ENCODE measurements at regions of chr2 and their contacts with region 1.

Region 1: GRCh38 chr2:178761759-178762371 is 45.4 kb downstream of the TTN start:
- DNase-seq: peak; percentile 55
- H3K4me3 ChIP-seq: no peak overlapping the region
- H3K27ac ChIP-seq: no peak overlapping the region
- H3K4me1 ChIP-seq: no peaks in the 10 kb centered on the region
- H3K27me3 ChIP-seq: peaks cover 4 to 5% of the 10 kb centered on the region in 2 experiments
- CTCF ChIP-seq: peak; percentile 51 to 56
- POLR2A ChIP-seq: no peak

Region 2: DNA sequence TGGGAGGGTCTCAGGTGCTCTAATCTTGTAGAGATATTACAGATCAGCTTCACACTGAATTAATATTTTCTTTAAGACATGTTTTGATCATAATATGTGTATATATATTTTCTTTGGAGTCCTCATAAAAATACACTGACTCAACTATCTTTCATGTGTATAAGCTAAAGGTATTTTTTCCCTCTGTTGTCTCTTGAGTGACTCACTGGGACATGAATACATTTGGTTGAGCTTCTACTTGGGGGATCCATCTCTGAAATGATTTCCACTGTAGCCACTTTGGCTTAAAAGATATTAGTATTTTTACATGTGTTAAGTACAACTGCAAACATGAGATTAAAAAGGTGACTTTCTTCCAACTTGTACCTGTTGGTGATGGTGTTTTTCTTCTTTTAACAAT is 95.4 kb before region 1 on chr2:
- CTCF ChIA-PET with region 1: no interaction called
- POLR2A ChIA-PET with region 1: no interaction called
- dilution Hi-C with region 1: no loop called
- intact Hi-C with region 1: no loop called
- DNase-seq: no peak
- H3K4me3 ChIP-seq: no peak overlapping the region
- H3K27ac ChIP-seq: no peak overlapping the region
- H3K4me1 ChIP-seq: no peaks in the 10 kb centered on the region
- H3K27me3 ChIP-seq: no peaks in the 10 kb centered on the region
- CTCF ChIP-seq: no peak
- POLR2A ChIP-seq: no peak

Region 3: DNA sequence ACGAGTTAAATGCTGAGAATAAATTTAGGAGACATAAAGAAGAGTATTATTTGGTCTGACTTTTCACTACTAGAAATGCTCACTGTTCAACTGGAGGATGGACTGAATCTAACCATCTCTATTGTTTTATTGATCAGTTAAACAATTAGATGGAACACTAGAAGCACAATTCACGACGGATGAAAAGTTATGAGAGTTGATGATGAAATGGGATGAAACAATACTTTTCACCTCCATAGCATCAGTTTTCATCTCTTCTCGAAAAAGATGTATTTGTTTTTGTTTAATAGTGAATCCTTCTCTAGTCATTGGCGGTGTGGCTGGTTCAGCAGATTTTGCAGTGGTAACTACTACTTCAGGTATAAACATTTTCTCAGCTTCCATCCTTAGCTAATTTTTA is 26.1 kb after region 1 on chr2:
- CTCF ChIA-PET with region 1: interaction called, 5 read pairs
- POLR2A ChIA-PET with region 1: no interaction called
- dilution Hi-C with region 1: no loop called
- intact Hi-C with region 1: loop called (anchors 1 kb)
- DNase-seq: no peak
- H3K4me3 ChIP-seq: no peak overlapping the region
- H3K27ac ChIP-seq: no peak overlapping the region
- H3K4me1 ChIP-seq: no peaks in the 10 kb centered on the region
- H3K27me3 ChIP-seq: peaks cover 0 to 4% of the 10 kb centered on the region in 2 experiments
- CTCF ChIP-seq: no peak
- POLR2A ChIP-seq: no peak

Region 4: GRCh38 chr2:178830451-178830850 is 68.6 kb after region 1 on chr2:
- CTCF ChIA-PET with region 1: no interaction called
- POLR2A ChIA-PET with region 1: no interaction called
- dilution Hi-C with region 1: no loop called
- intact Hi-C with region 1: no loop called
- DNase-seq: peak; percentile 42
- H3K4me3 ChIP-seq: peak overlapping the region in 1 of 3 experiments; percentile 37
- H3K27ac ChIP-seq: peak overlapping the region; percentile 71
- H3K4me1 ChIP-seq: peaks cover 46% of the 10 kb centered on the region
- H3K27me3 ChIP-seq: no peaks in the 10 kb centered on the region
- CTCF ChIP-seq: no peak
- POLR2A ChIP-seq: no peak

Region 5: DNA sequence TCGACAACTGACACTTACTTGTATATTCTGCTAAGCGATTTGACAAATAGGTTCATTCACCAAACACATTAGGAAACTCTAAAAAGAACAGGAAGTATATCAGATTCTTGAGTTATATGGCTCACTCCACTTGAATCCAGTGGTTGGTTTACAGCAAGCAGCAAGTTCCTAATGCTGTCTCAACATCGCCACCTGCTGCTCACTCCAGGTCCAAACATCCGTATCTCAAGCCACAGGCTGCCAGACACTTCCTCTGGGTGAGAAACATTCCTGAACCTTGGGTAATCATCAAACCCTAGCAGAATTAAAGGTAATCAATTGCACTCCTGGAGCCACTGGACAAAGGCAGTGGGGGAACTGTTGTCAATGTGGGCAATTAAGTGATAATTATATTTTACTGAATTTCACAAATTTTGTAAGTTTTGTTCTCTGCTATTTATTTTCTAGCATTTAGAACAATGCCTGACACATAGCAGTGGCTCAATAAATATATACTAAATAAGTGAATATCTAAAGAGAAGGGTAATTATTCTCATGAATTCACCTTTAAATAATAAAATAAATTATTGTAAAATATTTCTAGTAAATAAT is 152.5 kb after region 1 on chr2:
- CTCF ChIA-PET with region 1: interaction called, 25 read pairs
- POLR2A ChIA-PET with region 1: no interaction called
- dilution Hi-C with region 1: no loop called
- intact Hi-C with region 1: loop called (anchors 1 kb)
- DNase-seq: peak; percentile 88
- H3K4me3 ChIP-seq: no peak overlapping the region
- H3K27ac ChIP-seq: no peak overlapping the region
- H3K4me1 ChIP-seq: peaks cover 2% of the 10 kb centered on the region
- H3K27me3 ChIP-seq: peaks cover 0 to 10% of the 10 kb centered on the region in 2 experiments
- CTCF ChIP-seq: peak; percentile 79 to 88
- POLR2A ChIP-seq: no peak

Region 6: GRCh38 chr2:179020156-179020750 is 258.4 kb after region 1 on chr2:
- CTCF ChIA-PET with region 1: interaction called, 11 read pairs
- POLR2A ChIA-PET with region 1: no interaction called
- dilution Hi-C with region 1: no loop called
- intact Hi-C with region 1: loop called (anchors 10 kb)
- DNase-seq: peak; percentile 28
- H3K4me3 ChIP-seq: no peak overlapping the region
- H3K27ac ChIP-seq: no peak overlapping the region
- H3K4me1 ChIP-seq: no peaks in the 10 kb centered on the region
- H3K27me3 ChIP-seq: no peaks in the 10 kb centered on the region
- CTCF ChIP-seq: peak; percentile 43 to 56
- POLR2A ChIP-seq: no peak

Region 7: DNA sequence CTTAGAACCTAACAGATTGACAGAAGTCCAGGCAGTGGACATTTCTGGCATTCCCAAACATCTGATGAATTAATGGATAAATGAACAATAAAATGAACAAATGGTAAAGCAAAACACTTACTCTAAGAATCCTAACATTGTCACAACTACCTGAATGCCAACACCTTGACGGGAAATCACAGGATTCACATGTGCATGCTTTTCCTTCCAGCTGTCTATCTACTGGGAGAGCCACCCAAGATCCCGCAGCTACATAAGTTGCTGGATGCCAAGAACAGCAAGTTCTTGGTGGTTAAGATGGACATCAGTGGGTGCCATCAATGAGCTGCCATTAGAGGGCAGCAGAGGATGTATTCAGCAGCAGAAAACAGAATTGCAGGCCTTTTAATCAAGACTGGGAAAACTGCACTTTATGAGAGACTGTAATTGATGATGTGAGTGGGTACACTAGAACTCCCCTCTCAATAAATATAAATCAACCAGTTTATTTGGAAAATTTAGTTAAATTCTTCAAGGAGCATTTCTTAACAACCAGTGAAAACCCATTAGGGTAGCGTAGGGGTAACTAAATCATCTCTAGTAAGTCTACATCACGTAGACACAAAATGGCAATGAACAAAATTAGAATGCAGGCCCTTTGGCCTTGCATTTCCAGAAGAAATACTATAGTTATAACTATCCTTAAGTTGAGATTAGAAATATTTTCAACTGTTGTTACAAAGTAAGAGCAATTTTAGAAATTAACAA is 457.2 kb after region 1 on chr2:
- CTCF ChIA-PET with region 1: interaction called, 5 read pairs
- POLR2A ChIA-PET with region 1: no interaction called
- dilution Hi-C with region 1: no loop called
- intact Hi-C with region 1: loop called (anchors 1 kb)
- DNase-seq: peak; percentile 90
- H3K4me3 ChIP-seq: no peak overlapping the region
- H3K27ac ChIP-seq: no peak overlapping the region
- H3K4me1 ChIP-seq: no peaks in the 10 kb centered on the region
- H3K27me3 ChIP-seq: no peaks in the 10 kb centered on the region
- CTCF ChIP-seq: peak; percentile 82 to 85
- POLR2A ChIP-seq: no peak

Region 8: GRCh38 chr2:179440642-179441251 is 678.9 kb after region 1 on chr2:
- CTCF ChIA-PET with region 1: interaction called, 6 read pairs
- POLR2A ChIA-PET with region 1: no interaction called
- dilution Hi-C with region 1: no loop called
- intact Hi-C with region 1: loop called (anchors 5 kb)
- DNase-seq: no peak
- H3K4me3 ChIP-seq: no peak overlapping the region
- H3K27ac ChIP-seq: no peak overlapping the region
- H3K4me1 ChIP-seq: no peaks in the 10 kb centered on the region
- H3K27me3 ChIP-seq: peaks cover 0 to 2% of the 10 kb centered on the region in 2 experiments
- CTCF ChIP-seq: peak; percentile 51 to 57
- POLR2A ChIP-seq: no peak